Endothelial cell of umbilical vein (primary cell): ENCODE measurements at regions of chr4 and their contacts with region 1.

Region 1: DNA sequence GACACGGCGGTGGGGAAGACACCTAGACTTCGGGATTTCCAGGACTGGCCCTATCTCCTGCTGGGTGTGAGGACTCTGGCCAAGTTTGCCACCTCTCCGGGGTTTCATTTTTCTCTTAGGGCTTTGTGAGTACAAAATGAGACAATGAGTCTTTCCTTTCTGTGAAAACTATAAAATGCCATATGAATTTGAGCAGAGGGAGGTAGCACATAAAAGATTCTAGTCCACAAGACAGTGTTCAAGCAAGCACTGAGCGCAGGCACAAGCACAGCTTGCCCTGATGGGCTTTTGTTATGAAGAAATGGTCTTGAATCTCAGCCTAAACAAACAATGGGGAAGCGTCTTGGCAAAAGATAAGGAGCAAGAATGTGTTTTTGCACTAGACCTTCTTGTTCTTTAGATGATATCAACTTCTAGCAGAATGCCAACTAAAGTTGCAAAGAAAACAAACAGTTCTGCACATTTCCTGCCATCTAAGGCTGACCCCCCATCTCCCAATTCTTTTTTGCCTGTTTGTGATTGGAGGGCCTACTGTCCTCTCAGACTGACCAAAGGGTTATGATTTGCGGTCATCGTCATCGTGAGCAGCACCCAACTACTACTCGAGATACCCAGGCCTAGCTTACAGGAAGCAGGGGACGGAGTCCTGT is 73.0 kb upstream of the ZNF518B start:
- DNase-seq: peak; percentile 95
- H3K4me3 ChIP-seq: peak overlapping the region in 1 of 3 experiments; percentile 35
- H3K27ac ChIP-seq: peak overlapping the region; percentile 98
- H3K4me1 ChIP-seq: peaks cover 37% of the 10 kb centered on the region
- H3K27me3 ChIP-seq: no peaks in the 10 kb centered on the region
- CTCF ChIP-seq: no peak
- POLR2A ChIP-seq: peak; percentile 84

Region 2: DNA sequence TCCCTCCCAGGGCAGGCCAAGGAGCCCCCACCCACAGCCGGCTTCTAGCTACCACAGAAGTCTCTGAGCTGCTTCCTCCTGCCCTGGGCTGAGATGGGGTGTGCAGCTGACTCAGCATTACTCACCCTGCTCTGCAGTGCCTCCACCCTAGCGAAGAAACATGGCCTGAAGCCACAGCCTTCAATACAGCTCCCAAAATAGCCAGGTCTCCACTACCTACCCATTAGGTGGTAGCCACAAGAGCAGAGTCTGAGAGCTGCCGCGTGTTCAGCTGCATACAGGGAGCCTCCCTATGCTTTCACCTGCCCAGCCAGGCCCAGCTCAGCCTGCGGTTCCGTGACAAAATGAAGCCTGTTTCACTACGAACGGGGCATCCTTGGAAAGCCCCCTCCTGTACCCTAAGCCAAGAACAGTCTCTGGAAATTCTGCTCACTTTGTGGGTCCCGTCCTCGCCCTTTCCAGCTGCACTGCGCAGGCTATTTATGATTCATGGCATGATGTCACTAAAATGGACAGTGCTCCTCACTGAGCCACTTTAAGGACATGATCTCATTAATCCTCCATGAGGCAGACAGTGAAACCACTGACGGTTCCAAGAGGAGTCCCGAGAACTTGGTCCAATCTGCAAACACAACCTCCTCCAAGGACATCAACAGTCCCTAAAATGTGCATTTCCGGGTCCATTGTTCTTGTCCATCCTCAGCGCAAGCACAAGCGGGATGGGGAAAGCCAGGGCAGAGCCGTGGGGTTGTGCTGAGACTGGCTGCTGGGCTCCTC is 433.9 kb before region 1 on chr4:
- CTCF ChIA-PET with region 1: no interaction called
- POLR2A ChIA-PET with region 1: no interaction called
- dilution Hi-C with region 1: no loop called
- intact Hi-C with region 1: loop called (anchors 1 kb)
- DNase-seq: peak; percentile 71
- H3K4me3 ChIP-seq: no peak overlapping the region
- H3K27ac ChIP-seq: peak overlapping the region; percentile 79
- H3K4me1 ChIP-seq: peaks cover 82% of the 10 kb centered on the region
- H3K27me3 ChIP-seq: no peaks in the 10 kb centered on the region
- CTCF ChIP-seq: no peak
- POLR2A ChIP-seq: peak; percentile 45

Region 3: DNA sequence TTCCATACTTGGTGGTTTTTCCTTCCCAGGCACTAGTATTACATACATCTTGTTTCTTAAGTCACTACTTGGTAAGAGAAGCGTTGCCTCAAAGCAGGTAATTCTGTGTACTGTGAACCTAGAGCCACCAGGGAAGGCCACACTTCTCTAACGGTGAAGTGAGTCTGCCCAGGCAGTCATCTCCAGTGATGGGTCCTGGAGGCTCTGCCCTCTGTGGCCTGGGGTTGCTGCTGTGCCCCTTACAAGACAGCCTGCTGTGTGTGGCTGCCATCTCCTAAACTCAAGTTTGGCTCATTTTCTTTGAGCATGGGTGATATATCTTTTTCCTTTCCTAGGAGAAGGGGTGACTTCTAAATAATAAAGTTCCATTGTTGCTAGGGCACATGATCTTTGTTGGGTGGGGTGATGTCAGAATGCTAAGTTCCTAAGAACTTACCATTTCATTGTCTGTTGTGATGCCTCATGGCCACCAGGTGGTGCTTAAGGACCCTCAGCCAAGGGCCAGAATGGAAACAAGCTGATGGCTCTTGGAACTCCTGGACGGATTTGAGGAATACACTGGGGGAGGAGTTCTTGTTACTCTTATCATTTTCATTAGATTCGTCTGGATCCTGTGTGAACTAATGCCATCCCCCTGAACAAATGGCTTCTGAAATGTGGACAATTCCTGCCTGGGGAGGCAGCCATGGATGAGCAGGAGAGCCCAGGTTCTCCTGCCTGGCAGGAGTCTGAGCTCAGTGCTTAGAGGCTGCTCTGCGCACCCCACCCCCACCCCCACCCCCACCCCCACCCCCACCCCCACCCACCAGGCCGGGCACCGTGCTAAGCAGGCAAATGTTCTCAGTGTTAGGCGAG is 372.6 kb before region 1 on chr4:
- CTCF ChIA-PET with region 1: interaction called, 88 read pairs
- POLR2A ChIA-PET with region 1: no interaction called
- dilution Hi-C with region 1: loop called (anchors 25 kb)
- intact Hi-C with region 1: no loop called
- DNase-seq: peak; percentile 74
- H3K4me3 ChIP-seq: no peak overlapping the region
- H3K27ac ChIP-seq: no peak overlapping the region
- H3K4me1 ChIP-seq: no peaks in the 10 kb centered on the region
- H3K27me3 ChIP-seq: peaks cover 2 to 7% of the 10 kb centered on the region in 2 experiments
- CTCF ChIP-seq: peak; percentile 79 to 82
- POLR2A ChIP-seq: no peak

Region 4: GRCh38 chr4:10180927-10181782 is 349.1 kb before region 1 on chr4:
- CTCF ChIA-PET with region 1: interaction called, 3 read pairs
- POLR2A ChIA-PET with region 1: no interaction called
- dilution Hi-C with region 1: no loop called
- intact Hi-C with region 1: loop called (anchors 1 kb)
- DNase-seq: peak; percentile 55
- H3K4me3 ChIP-seq: no peak overlapping the region
- H3K27ac ChIP-seq: peak overlapping the region; percentile 87
- H3K4me1 ChIP-seq: peaks cover 18% of the 10 kb centered on the region
- H3K27me3 ChIP-seq: no peaks in the 10 kb centered on the region
- CTCF ChIP-seq: no peak
- POLR2A ChIP-seq: no peak

Region 5: DNA sequence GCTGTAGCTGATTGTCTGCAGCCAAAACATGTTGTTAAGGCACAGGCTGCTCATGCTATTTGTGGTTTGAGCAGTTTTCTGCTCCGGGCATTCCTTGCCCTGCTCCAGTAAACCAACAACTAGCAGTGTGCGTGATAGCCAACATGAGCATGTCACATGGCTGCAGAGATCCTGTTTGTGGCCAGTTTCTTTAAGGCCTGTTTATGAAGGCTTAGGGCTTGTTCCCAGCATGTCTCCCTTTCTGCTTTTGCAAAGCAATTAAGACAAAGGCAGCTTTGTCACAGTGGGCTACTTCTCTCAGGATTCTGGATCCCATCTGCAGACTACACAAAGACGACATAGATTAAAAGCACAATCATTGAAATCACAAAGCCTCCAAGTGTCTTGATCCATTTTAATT is 233.5 kb before region 1 on chr4:
- CTCF ChIA-PET with region 1: no interaction called
- POLR2A ChIA-PET with region 1: no interaction called
- dilution Hi-C with region 1: no loop called
- intact Hi-C with region 1: no loop called
- DNase-seq: no peak
- H3K4me3 ChIP-seq: no peak overlapping the region
- H3K27ac ChIP-seq: no peak overlapping the region
- H3K4me1 ChIP-seq: no peaks in the 10 kb centered on the region
- H3K27me3 ChIP-seq: no peaks in the 10 kb centered on the region
- CTCF ChIP-seq: no peak
- POLR2A ChIP-seq: no peak

Region 6: DNA sequence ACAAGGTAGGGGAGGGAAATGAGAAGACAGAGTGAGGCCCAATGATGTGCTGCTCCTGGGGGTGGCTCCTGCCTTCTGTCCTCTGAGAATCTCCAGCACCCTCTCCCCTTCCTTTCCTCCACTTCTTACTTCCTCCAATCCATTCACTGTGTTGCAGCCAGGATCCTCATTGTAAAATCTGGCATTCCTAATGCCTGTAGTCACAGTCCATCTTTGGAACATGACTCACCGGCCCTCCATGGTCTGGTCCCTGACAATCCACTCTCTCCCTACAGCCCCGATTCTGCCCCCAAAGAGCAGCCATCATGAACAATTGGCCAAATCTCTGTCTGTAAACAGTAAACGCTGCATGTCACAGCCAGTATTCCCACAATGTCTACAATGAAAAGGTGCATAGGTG is 81.4 kb after region 1 on chr4:
- CTCF ChIA-PET with region 1: no interaction called
- POLR2A ChIA-PET with region 1: no interaction called
- dilution Hi-C with region 1: no loop called
- intact Hi-C with region 1: loop called (anchors 1 kb)
- DNase-seq: peak; percentile 76
- H3K4me3 ChIP-seq: no peak overlapping the region
- H3K27ac ChIP-seq: peak overlapping the region; percentile 64
- H3K4me1 ChIP-seq: peaks cover 12% of the 10 kb centered on the region
- H3K27me3 ChIP-seq: peaks cover 0 to 3% of the 10 kb centered on the region in 2 experiments
- CTCF ChIP-seq: no peak
- POLR2A ChIP-seq: no peak